ENCODE measurements at regions of chr15 and their contacts with region 1.

Region 1: GRCh38 chr15:74950078-74951000 is 6.2 kb downstream of the RPP25 start:
- DNase-seq: peak; percentile 59 to 85 (median 66)
- ATAC-seq: peak; percentile 67
- H3K4me3 ChIP-seq: no peak overlapping the region
- H3K27ac ChIP-seq: no peak overlapping the region
- H3K4me1 ChIP-seq: peaks cover 22 to 30% of the 10 kb centered on the region in 2 experiments; a peak in 4 of 5 replicates
- H3K27me3 ChIP-seq: no peaks in the 10 kb centered on the region; a peak in 1 of 5 replicates
- CTCF ChIP-seq: peak; percentile 92 to 99 (median 98)
- EP300 ChIP-seq: no peak
- POLR2A ChIP-seq: no peak
- RAD21 ChIP-seq: peak; percentile 85 to 96

Region 2: GRCh38 chr15:74635228-74635627 is 315.1 kb before region 1 on chr15:
- CTCF ChIA-PET with region 1: no interaction called
- POLR2A ChIA-PET with region 1: no interaction called
- in situ Hi-C with region 1: loop called (anchors 5 kb)
- intact Hi-C with region 1: loop called (anchors 5 kb)
- DNase-seq: peak; percentile 75 to 83 (median 76)
- ATAC-seq: peak; percentile 89
- H3K4me3 ChIP-seq: no peak overlapping the region
- H3K27ac ChIP-seq: no peak overlapping the region
- H3K4me1 ChIP-seq: no peaks in the 10 kb centered on the region; a peak in 1 of 5 replicates
- H3K27me3 ChIP-seq: no peaks in the 10 kb centered on the region
- CTCF ChIP-seq: peak; percentile 88 to 91 (median 90)
- EP300 ChIP-seq: no peak
- POLR2A ChIP-seq: no peak
- RAD21 ChIP-seq: peak; percentile 82 to 97

Region 3: GRCh38 chr15:74768771-74769342 is 181.5 kb before region 1 on chr15:
- CTCF ChIA-PET with region 1: interaction called, 17 read pairs
- POLR2A ChIA-PET with region 1: interaction called, 4 read pairs
- in situ Hi-C with region 1: loop called (anchors 5 kb)
- intact Hi-C with region 1: loop called (anchors 1 kb)
- DNase-seq: peak; percentile 72 to 80 (median 75)
- ATAC-seq: peak; percentile 75
- H3K4me3 ChIP-seq: no peak overlapping the region
- H3K27ac ChIP-seq: no peak overlapping the region
- H3K4me1 ChIP-seq: peaks cover 0 to 12% of the 10 kb centered on the region in 2 experiments; a peak in 1 of 5 replicates
- H3K27me3 ChIP-seq: peaks cover 4 to 27% of the 10 kb centered on the region in 2 experiments; a peak in 3 of 5 replicates
- CTCF ChIP-seq: peak; percentile 84 to 85 (median 84)
- EP300 ChIP-seq: no peak
- POLR2A ChIP-seq: no peak
- RAD21 ChIP-seq: peak; percentile 73 to 92

Region 4: DNA sequence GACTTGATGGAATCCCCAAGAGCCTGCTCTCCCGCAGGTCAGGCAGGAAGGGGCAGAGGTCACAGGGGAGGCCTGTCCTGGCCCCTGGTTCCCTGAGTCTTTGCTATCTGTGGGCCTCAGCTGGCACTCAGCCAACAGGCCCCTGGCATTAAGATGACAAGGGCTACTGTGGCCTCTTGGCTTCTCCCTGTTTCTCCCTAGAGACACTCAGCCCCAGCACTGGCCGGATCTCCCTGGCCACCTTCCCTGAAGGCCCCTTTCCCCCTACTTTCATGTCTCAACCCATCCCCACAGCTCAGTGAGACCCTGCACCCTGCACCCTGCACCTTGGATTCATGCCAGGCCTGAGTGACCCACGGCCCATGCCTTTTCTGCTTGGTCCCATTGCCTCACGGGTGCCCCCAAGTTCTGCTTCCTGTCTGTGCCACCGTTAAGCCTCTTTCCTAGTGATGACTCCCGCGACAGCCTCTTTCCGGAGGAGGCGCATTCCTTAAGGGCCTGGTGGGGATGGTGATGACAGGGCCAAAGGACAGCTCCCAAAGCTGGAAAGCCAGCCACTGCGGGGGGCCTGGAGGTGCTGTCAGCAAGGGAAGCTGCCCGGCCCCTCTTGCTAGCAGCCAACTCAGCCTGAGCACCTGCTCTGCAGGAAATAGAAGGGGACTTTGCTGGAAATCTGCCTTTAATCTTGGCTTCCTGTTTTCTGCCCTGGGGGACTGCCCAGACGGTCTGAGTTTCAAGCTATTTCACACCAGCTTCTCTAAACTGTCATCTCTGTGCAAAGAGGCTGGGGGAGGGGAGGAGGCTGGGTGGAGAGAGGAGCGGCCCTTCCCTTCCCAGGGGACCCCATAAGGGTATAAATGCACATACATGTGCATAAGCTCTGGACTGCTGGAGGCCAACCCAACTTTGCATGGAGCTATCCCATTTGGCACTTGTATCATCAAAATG is 173.2 kb before region 1 on chr15:
- CTCF ChIA-PET with region 1: no interaction called
- POLR2A ChIA-PET with region 1: interaction called, 4 read pairs
- in situ Hi-C with region 1: loop called (anchors 5 kb)
- intact Hi-C with region 1: no loop called
- DNase-seq: no peak
- ATAC-seq: no peak; the same call in 2 of the 3 replicates
- H3K4me3 ChIP-seq: no peak overlapping the region
- H3K27ac ChIP-seq: no peak overlapping the region
- H3K4me1 ChIP-seq: peaks cover 32 to 43% of the 10 kb centered on the region in 2 experiments
- H3K27me3 ChIP-seq: no peaks in the 10 kb centered on the region
- CTCF ChIP-seq: no peak
- EP300 ChIP-seq: peak; percentile 27; the same call in 1 of the 2 replicates
- POLR2A ChIP-seq: no peak
- RAD21 ChIP-seq: no peak

Region 5: GRCh38 chr15:74799856-74800547 is 150.3 kb before region 1 on chr15:
- CTCF ChIA-PET with region 1: no interaction called
- POLR2A ChIA-PET with region 1: no interaction called
- in situ Hi-C with region 1: no loop called
- intact Hi-C with region 1: loop called (anchors 1 kb)
- DNase-seq: peak; percentile 84 to 95 (median 92)
- ATAC-seq: peak; percentile 99
- H3K4me3 ChIP-seq: no peak overlapping the region
- H3K27ac ChIP-seq: no peak overlapping the region
- H3K4me1 ChIP-seq: peaks cover 0 to 43% of the 10 kb centered on the region in 2 experiments; a peak in 3 of 5 replicates
- H3K27me3 ChIP-seq: no peaks in the 10 kb centered on the region
- CTCF ChIP-seq: peak; percentile 95 to 96 (median 96)
- EP300 ChIP-seq: no peak
- POLR2A ChIP-seq: no peak
- RAD21 ChIP-seq: peak; percentile 90 to 95

Region 6: DNA sequence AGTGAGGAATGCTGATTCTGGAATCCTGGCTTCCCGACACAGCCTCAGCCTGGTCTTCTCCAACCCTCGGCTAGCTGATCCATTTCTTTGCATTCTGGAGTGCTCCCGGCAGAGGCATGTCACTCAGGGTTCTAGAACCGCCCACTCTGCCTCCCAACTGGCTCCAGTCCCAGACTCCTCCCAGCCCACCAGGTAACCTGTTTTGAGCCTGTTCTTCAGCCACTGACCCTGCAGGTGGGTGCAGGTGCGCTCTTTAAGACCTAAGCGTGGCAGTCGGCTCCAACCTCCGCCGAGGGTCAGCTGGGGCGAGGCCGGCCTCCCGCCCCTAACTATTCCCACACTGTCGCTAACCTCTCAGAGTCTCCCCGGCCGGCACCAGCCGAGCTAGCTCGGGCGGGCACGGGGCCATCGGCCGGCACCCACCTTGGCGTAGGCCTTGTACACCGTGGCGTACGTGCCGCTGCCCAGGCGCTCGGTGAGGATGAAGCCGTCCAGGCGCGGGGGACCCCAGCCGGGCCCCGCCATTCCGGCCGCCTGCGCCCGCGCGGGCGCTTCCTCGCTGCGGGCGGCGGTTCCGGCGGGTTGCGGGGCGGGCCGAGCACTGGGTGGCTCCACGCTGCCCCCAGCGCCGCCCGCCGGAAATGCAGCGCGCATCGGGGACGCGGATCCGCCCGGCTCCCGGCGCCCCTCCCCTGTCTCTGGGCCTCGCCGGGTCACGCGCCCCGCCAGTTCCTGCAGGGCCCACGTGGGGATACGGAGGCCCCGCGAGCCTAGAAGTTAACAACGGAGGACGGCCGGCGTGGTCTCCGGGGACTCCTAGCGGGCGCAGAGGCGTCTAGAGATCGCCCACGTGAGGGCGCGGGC is 107.5 kb before region 1 on chr15 and contains the start of gene ULK3:
- CTCF ChIA-PET with region 1: no interaction called
- POLR2A ChIA-PET with region 1: interaction called, 4 read pairs
- in situ Hi-C with region 1: no loop called
- intact Hi-C with region 1: loop called (anchors 5 kb)
- DNase-seq: peak; percentile 93 to 96 (median 94)
- ATAC-seq: peak; percentile 91
- H3K4me3 ChIP-seq: peak within 1 kb of the TSS; percentile 99
- H3K27ac ChIP-seq: peak within 1 kb of the TSS; percentile 77
- H3K4me1 ChIP-seq: peaks cover 19 to 59% of the 10 kb centered on the region in 2 experiments; a peak in 4 of 5 replicates
- H3K27me3 ChIP-seq: no peaks in the 10 kb centered on the region
- CTCF ChIP-seq: peak; percentile 67 to 85 (median 78)
- EP300 ChIP-seq: no peak
- POLR2A ChIP-seq: peak; percentile 81
- RAD21 ChIP-seq: peak; percentile 33 to 39
- polyA plus RNA-seq, gene ULK3: 0.68 to 0.88 TPM

Region 7: DNA sequence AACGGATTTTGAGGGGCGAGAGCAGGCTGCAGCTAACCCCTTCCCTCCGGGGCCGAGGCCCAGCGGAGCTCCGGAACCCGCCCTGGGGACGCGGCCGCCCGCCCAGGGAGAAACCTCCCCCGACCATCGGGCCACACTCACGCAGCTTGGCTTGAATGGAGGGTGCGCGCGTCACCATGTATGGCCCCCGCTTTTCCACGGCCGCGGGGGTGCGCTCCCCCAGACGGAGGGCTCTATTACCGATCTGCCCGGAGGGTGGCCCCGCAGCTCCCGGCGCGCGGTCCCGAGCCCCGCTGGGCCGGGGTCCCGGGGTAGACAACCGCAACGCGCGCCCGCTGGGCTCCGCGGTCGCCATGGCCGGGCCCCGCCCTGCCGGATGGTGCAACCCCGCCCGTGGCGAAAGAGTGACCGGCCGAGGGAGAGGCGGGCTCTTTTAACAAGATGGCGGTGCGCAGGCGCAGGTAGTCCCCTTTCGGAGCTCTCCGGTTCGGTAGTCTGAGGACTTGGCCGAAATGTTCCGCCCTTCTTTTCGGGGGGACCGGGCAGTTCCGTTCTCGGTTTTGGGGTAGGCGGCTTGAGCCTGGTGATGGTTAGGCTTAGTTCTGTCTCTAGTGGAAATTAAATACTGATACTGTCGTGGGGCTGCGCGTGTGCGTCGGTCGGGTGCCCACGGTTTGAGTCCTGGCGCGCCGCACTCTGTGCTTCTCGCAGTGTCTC is 43.7 kb before region 1 on chr15 and contains the start of gene FAM219B:
- CTCF ChIA-PET with region 1: no interaction called
- POLR2A ChIA-PET with region 1: interaction called, 4 read pairs
- in situ Hi-C with region 1: no loop called
- intact Hi-C with region 1: loop called (anchors 2 kb)
- DNase-seq: peak; percentile 94 to 96 (median 95)
- ATAC-seq: peak; percentile 97
- H3K4me3 ChIP-seq: peak within 1 kb of the TSS; percentile 95
- H3K27ac ChIP-seq: peak within 1 kb of the TSS; percentile 89
- H3K4me1 ChIP-seq: peaks cover 11 to 14% of the 10 kb centered on the region in 2 experiments; a peak in 4 of 5 replicates
- H3K27me3 ChIP-seq: no peaks in the 10 kb centered on the region
- CTCF ChIP-seq: no peak; a peak in 1 of 6 replicates
- EP300 ChIP-seq: no peak
- POLR2A ChIP-seq: peak; percentile 87
- RAD21 ChIP-seq: no peak
- polyA plus RNA-seq, gene FAM219B: 6.8 to 10.2 TPM